Stomach (tissue), 19 donors: ENCODE measurements at regions of chr10 and their contacts with region 1.

Region 1: DNA sequence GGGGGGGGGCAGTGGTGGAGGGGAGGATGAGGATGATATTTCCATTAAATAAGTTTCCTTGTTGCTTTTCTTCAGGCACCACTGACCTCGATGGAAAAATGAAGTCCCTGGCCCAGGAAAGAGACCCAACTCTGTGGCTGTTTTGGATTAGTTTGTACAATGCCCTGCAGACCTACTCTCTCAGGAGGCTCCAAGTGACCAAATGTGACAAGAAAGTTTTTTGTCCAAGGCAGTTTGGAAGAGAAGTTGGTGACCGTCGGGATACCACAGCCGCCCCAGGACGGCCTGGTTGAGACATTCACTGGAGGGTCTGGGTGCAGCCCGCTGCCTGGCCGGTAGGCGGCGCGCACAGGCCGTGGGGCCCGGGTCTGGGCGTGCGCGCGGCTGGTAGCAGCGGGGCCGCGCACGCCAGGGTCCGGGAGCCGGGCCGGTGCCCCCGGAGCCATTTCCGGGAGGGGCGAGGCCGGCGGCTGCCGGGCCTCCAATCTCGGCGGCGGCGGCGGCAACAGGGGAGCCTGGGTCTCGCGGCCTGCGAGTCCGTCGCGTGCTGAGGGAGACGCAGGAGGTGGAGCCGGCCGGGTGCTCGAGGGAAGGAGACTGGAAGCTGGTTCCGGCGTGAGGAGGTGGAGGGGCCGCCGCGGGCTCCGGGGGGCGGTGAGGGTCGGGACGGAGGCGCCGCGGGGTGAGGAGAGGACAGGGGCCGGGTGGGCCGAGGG is at the start of gene SGPL1:
- DNase-seq: peak; percentile 92 to 95
- H3K4me3 ChIP-seq: peak within 1 kb of the TSS; percentile 68 to 92 (median 74)
- H3K27ac ChIP-seq: peak within 1 kb of the TSS; percentile 92 to 100 (median 95)
- H3K4me1 ChIP-seq: peaks cover 6 to 27% (median 12%) of the 10 kb centered on the region in 4 donors
- H3K27me3 ChIP-seq: no peaks in the 10 kb centered on the region
- CTCF ChIP-seq: peak in 5 of 7 experiments; percentile 74 to 99 (median 96)
- EP300 ChIP-seq: no peak
- POLR2A ChIP-seq: no peak
- total RNA-seq, gene SGPL1: 1.2 to 65.5 (median 32.5) TPM

Region 2: DNA sequence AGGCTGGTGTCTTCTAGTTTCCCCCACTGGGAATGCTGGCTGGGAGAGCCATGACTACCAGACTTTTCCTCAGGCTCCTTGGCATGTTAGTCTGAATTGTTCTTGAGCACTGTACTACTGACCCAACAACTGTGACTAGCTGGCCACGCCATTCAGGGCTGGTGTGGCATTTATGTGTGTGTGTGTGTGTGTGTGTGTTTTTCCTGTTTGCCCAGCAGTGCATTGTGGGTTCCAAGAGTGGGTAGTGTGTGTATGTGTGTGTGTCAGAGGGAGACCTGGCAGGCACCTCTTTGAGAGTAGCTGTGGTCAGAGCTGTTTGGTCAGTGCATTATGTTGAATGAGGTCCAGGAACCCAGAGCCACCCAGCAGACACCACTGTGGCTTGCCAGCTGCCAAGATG is 63.5 kb after region 1 on chr10:
- intact Hi-C with region 1: loop called (anchors 5 kb)
- DNase-seq: peak in 1 of 2 donors; percentile 42
- H3K4me3 ChIP-seq: no peak overlapping the region
- H3K27ac ChIP-seq: no peak overlapping the region
- H3K4me1 ChIP-seq: peaks cover 0 to 17% (median 0%) of the 10 kb centered on the region in 4 donors
- H3K27me3 ChIP-seq: no peaks in the 10 kb centered on the region
- CTCF ChIP-seq: no peak
- EP300 ChIP-seq: no peak
- POLR2A ChIP-seq: no peak